ENCODE measurements at regions of chr16 and their contacts with region 1.

Region 1: GRCh38 chr16:16191493-16192167 is 31.7 kb downstream of the ABCC6 start:
- DNase-seq: no peak
- H3K4me3 ChIP-seq: no peak overlapping the region
- H3K4me3 Mint-ChIP-seq: no peak overlapping the region
- H3K27ac ChIP-seq: no peak overlapping the region
- H3K27ac Mint-ChIP-seq: no peak overlapping the region
- H3K4me1 ChIP-seq: no peaks in the 10 kb centered on the region
- H3K4me1 Mint-ChIP-seq: peaks cover 0 to 2% (median 0%) of the 10 kb centered on the region in 4 donors
- H3K27me3 ChIP-seq: no peaks in the 10 kb centered on the region
- H3K27me3 Mint-ChIP-seq: peaks cover 2 to 6% of the 10 kb centered on the region in 2 donors

Region 2: GRCh38 chr16:15765880-15766279 is 425.8 kb before region 1 on chr16:
- CTCF ChIA-PET with region 1: interaction called, 3 read pairs
- POLR2A ChIA-PET with region 1: no interaction called
- intact Hi-C with region 1: loop called (anchors 10 kb)
- DNase-seq: peak in 4 of 5 donors; percentile 24 to 41 (median 36)
- H3K4me3 ChIP-seq: no peak overlapping the region
- H3K4me3 Mint-ChIP-seq: no peak overlapping the region
- H3K27ac ChIP-seq: no peak overlapping the region
- H3K27ac Mint-ChIP-seq: peak overlapping the region in 1 of 7 donors; percentile 43
- H3K4me1 ChIP-seq: no peaks in the 10 kb centered on the region
- H3K4me1 Mint-ChIP-seq: no peaks in the 10 kb centered on the region
- H3K27me3 ChIP-seq: peaks cover 3% of the 10 kb centered on the region
- H3K27me3 Mint-ChIP-seq: peaks cover 5 to 11% of the 10 kb centered on the region in 2 donors

Region 3: DNA sequence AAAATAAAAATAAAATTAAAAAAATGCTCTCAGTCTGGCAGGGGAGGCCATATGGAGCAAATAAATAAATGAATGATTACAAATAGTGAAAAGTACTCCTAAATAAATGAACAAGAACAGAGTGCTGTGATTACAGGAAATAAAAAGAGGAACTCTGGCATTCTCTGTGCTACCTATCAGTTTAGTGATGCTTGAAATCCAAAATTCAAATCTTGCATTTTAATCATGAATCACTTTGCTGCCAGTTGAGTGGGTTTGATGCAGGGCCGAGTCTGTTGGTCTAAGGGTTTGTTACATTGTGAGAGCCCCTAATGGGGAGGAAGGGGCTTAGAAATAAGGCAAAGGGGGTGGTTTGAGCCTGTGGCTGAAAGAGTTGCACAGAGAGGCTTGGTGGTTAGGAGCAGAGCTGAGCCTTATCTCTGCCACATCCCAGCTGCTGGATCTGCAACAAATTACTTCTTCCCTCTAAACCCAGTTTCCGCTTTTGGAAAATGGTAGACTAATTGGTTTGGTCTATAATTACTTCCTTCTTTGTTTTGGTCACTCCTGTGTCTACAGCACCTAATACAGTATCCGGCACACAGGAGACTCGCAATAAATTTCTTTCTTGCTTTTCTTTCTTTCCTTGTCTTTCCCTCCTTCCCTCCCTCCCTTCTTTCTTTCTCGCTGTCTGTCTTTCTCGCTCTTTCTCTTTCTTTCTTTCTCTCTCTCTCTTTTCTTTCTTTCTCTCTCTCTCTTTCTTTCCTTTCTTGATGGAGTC is 248.5 kb before region 1 on chr16:
- CTCF ChIA-PET with region 1: no interaction called
- POLR2A ChIA-PET with region 1: no interaction called
- intact Hi-C with region 1: no loop called
- DNase-seq: no peak
- H3K4me3 ChIP-seq: no peak overlapping the region
- H3K4me3 Mint-ChIP-seq: no peak overlapping the region
- H3K27ac ChIP-seq: no peak overlapping the region
- H3K27ac Mint-ChIP-seq: peak overlapping the region in 1 of 7 donors; percentile 17
- H3K4me1 ChIP-seq: no peaks in the 10 kb centered on the region
- H3K4me1 Mint-ChIP-seq: peaks cover 0 to 4% (median 2%) of the 10 kb centered on the region in 4 donors
- H3K27me3 ChIP-seq: no peaks in the 10 kb centered on the region
- H3K27me3 Mint-ChIP-seq: no peaks in the 10 kb centered on the region